Right ventricle myocardium inferior (tissue), 1 donor: ENCODE measurements at regions of chr13 and their contacts with region 1.

Region 1: GRCh38 chr13:21060987-21061763 is at the start of gene LATS2:
- DNase-seq: peak; percentile 99
- ATAC-seq: peak; percentile 96
- total RNA-seq, gene LATS2: 23.7 TPM

Region 2: GRCh38 chr13:20997430-20998161 is 63.6 kb before region 1 on chr13:
- intact Hi-C with region 1: loop called (anchors 10 kb)
- DNase-seq: peak; percentile 72
- ATAC-seq: peak; percentile 81

Region 3: DNA sequence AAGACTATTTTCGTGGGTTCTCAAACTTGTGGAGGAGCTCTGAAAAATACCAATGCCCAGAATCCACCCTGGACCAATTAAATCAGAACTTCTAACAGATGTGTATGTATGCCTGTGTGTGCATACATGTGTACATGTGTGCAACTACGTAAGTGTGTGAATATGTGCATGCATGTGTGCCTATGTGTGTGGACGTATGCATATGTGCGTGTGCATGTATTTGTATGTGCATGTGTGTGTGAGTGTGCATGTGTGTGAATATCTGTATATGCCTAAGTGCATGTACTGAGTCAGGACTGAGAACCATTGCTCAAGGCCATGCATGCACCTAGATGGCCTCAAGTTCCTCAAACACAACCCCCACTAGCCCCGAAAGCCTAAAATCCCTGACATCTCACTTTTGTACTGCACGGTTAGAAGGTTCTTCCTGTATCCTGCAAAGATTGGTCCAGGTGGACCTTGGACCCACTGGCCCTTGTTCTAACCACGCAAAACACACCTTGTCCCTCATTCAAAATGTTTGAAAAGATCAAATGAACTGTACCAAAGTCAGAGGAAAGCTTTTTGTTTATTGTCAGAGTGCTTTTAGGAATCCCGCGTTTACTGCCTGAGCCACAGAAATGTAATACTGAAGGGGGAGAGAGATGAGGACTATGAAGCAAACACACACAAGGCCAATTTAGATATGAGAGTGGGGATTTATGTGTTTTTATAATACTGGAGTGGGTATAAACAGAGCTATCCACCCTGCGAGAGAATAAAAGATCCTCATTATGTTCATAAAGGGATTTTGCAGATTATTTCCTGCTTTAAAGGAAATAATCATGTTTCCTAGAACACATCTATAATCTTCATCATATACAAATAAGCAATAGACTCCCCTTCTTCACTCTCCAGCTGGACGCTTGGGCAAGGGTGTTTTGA is 38.9 kb before region 1 on chr13:
- intact Hi-C with region 1: loop called (anchors 5 kb)
- DNase-seq: no peak
- ATAC-seq: no peak